Natural killer cell (primary cell): ENCODE measurements at regions of chr5 and their contacts with region 1.

Region 1: DNA sequence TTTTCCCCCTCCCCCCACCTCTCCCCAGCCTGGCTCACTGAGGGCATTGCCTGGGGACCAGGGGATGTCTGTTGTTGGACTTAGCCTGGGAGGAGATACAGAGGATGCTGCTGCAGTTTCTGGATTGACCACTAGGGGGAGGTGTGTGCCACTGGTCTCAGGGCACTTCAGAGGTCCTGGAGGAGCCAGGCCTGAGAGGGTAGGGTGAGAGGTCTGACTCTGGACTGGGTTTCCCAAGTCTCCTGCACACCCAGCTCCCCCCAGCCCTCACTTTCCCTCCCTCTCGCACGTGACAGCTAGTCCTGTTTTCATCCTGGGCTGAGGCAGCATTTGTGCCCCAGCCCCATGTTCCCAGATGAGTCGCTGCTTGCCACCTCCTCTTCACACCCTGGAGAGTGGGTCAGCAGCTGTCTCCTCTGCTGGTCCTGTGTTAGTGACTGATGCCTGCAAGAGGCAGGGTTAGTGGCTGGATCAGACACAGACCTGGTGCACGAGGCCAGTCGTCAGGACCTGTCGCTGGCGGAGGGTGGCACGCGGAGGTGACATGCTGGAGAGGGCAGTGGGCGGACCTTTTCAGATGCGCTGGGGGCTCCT is 4.4 kb downstream of the IL3 start:
- DNase-seq: peak; percentile 76 to 88
- ATAC-seq: peak; percentile 78 to 81 (median 79)
- H3K4me3 ChIP-seq: no peak overlapping the region
- H3K4me3 Mint-ChIP-seq: no peak overlapping the region
- H3K27ac ChIP-seq: no peak overlapping the region
- H3K27ac Mint-ChIP-seq: peak overlapping the region in 1 of 2 donors; percentile 9
- H3K4me1 ChIP-seq: peaks cover 27% of the 10 kb centered on the region
- H3K4me1 Mint-ChIP-seq: peaks cover 13 to 37% of the 10 kb centered on the region in 2 donors
- H3K27me3 ChIP-seq: no peaks in the 10 kb centered on the region
- H3K27me3 Mint-ChIP-seq: no peaks in the 10 kb centered on the region
- CTCF ChIP-seq: peak; percentile 67

Region 2: GRCh38 chr5:131589510-131590348 is 475.1 kb before region 1 on chr5:
- intact Hi-C with region 1: loop called (anchors 1 kb)
- DNase-seq: peak in 1 of 2 donors; percentile 81
- ATAC-seq: peak; percentile 65 to 78 (median 75)
- H3K4me3 ChIP-seq: no peak overlapping the region
- H3K4me3 Mint-ChIP-seq: no peak overlapping the region
- H3K27ac ChIP-seq: no peak overlapping the region
- H3K27ac Mint-ChIP-seq: no peak overlapping the region
- H3K4me1 ChIP-seq: peaks cover 14% of the 10 kb centered on the region
- H3K4me1 Mint-ChIP-seq: peaks cover 24 to 26% of the 10 kb centered on the region in 2 donors
- H3K27me3 ChIP-seq: no peaks in the 10 kb centered on the region
- H3K27me3 Mint-ChIP-seq: no peaks in the 10 kb centered on the region
- CTCF ChIP-seq: peak; percentile 92

Region 3: GRCh38 chr5:131671994-131672655 is 392.7 kb before region 1 on chr5:
- intact Hi-C with region 1: no loop called
- DNase-seq: no peak
- ATAC-seq: no peak
- H3K4me3 ChIP-seq: no peak overlapping the region
- H3K4me3 Mint-ChIP-seq: no peak overlapping the region
- H3K27ac ChIP-seq: no peak overlapping the region
- H3K27ac Mint-ChIP-seq: peak overlapping the region; percentile 55 to 74
- H3K4me1 ChIP-seq: no peaks in the 10 kb centered on the region
- H3K4me1 Mint-ChIP-seq: no peaks in the 10 kb centered on the region
- H3K27me3 ChIP-seq: no peaks in the 10 kb centered on the region
- H3K27me3 Mint-ChIP-seq: no peaks in the 10 kb centered on the region
- CTCF ChIP-seq: no peak

Region 4: GRCh38 chr5:131854134-131854533 is 210.7 kb before region 1 on chr5:
- intact Hi-C with region 1: no loop called
- DNase-seq: peak in 1 of 2 donors; percentile 31
- ATAC-seq: peak; percentile 60 to 70 (median 67)
- H3K4me3 ChIP-seq: no peak overlapping the region
- H3K4me3 Mint-ChIP-seq: no peak overlapping the region
- H3K27ac ChIP-seq: peak overlapping the region; percentile 25
- H3K27ac Mint-ChIP-seq: peak overlapping the region; percentile 65 to 70
- H3K4me1 ChIP-seq: no peaks in the 10 kb centered on the region
- H3K4me1 Mint-ChIP-seq: peaks cover 15 to 18% of the 10 kb centered on the region in 2 donors
- H3K27me3 ChIP-seq: peaks cover 3% of the 10 kb centered on the region
- H3K27me3 Mint-ChIP-seq: peaks cover 3 to 8% of the 10 kb centered on the region in 2 donors
- CTCF ChIP-seq: no peak

Region 5: GRCh38 chr5:132103332-132103951 is 38.6 kb after region 1 on chr5:
- intact Hi-C with region 1: loop called (anchors 5 kb)
- DNase-seq: peak; percentile 69 to 85
- ATAC-seq: peak; percentile 65 to 88 (median 75)
- H3K4me3 ChIP-seq: no peak overlapping the region
- H3K4me3 Mint-ChIP-seq: peak overlapping the region; percentile 71
- H3K27ac ChIP-seq: peak overlapping the region; percentile 94
- H3K27ac Mint-ChIP-seq: peak overlapping the region; percentile 92 to 94
- H3K4me1 ChIP-seq: peaks cover 66% of the 10 kb centered on the region
- H3K4me1 Mint-ChIP-seq: peaks cover 71 to 74% of the 10 kb centered on the region in 2 donors
- H3K27me3 ChIP-seq: no peaks in the 10 kb centered on the region
- H3K27me3 Mint-ChIP-seq: no peaks in the 10 kb centered on the region
- CTCF ChIP-seq: no peak

Region 6: GRCh38 chr5:132114150-132115121 is 49.6 kb after region 1 on chr5:
- intact Hi-C with region 1: loop called (anchors 5 kb)
- DNase-seq: no peak
- ATAC-seq: peak; percentile 45 to 65 (median 52)
- H3K4me3 ChIP-seq: no peak overlapping the region
- H3K4me3 Mint-ChIP-seq: peak overlapping the region; percentile 77
- H3K27ac ChIP-seq: no peak overlapping the region
- H3K27ac Mint-ChIP-seq: peak overlapping the region; percentile 83 to 92
- H3K4me1 ChIP-seq: peaks cover 38% of the 10 kb centered on the region
- H3K4me1 Mint-ChIP-seq: peaks cover 58 to 67% of the 10 kb centered on the region in 2 donors
- H3K27me3 ChIP-seq: no peaks in the 10 kb centered on the region
- H3K27me3 Mint-ChIP-seq: no peaks in the 10 kb centered on the region
- CTCF ChIP-seq: no peak

Region 7: GRCh38 chr5:132134384-132134783 is 69.5 kb after region 1 on chr5:
- intact Hi-C with region 1: loop called (anchors 1 kb)
- DNase-seq: peak in 1 of 2 donors; percentile 55
- ATAC-seq: peak in 2 of 3 donors; percentile 38 to 48
- H3K4me3 ChIP-seq: no peak overlapping the region
- H3K4me3 Mint-ChIP-seq: no peak overlapping the region
- H3K27ac ChIP-seq: no peak overlapping the region
- H3K27ac Mint-ChIP-seq: no peak overlapping the region
- H3K4me1 ChIP-seq: no peaks in the 10 kb centered on the region
- H3K4me1 Mint-ChIP-seq: no peaks in the 10 kb centered on the region
- H3K27me3 ChIP-seq: no peaks in the 10 kb centered on the region
- H3K27me3 Mint-ChIP-seq: peaks cover 0 to under 1% of the 10 kb centered on the region in 2 donors
- CTCF ChIP-seq: peak; percentile 42

Region 8: DNA sequence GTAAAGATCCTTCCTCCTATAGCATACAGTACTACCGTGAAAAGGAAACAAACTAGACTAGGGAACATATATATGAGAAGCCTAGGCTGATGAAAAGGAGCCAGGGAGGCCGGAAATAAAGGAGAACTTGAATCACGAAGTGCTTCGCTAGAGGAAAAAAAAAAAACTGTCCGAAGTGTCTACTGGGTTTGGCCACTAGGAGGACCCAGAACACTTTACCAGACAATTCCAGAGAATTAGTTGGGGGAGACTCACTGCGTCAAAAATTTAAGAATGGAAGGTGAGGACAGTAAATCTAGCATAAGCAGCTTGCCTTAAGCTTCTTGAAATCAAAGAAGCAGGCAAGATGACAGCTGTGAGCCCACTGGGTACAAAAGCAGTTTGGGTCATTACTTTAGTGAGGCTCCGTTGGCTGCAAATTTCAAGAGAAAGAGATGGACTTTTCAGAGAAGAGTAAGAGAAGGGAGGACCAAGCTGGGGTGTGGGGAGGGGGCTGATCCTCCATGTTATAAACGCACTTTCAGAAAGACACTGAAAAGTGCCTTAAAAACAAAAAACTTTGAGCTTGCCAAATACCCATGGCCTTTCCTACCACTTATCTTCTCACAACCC is 115.4 kb after region 1 on chr5:
- intact Hi-C with region 1: loop called (anchors 1 kb)
- DNase-seq: peak in 1 of 2 donors; percentile 30
- ATAC-seq: peak in 2 of 3 donors; percentile 44 to 66
- H3K4me3 ChIP-seq: no peak overlapping the region
- H3K4me3 Mint-ChIP-seq: no peak overlapping the region
- H3K27ac ChIP-seq: no peak overlapping the region
- H3K27ac Mint-ChIP-seq: no peak overlapping the region
- H3K4me1 ChIP-seq: no peaks in the 10 kb centered on the region
- H3K4me1 Mint-ChIP-seq: peaks cover 8 to 17% of the 10 kb centered on the region in 2 donors
- H3K27me3 ChIP-seq: no peaks in the 10 kb centered on the region
- H3K27me3 Mint-ChIP-seq: peaks cover 0 to 4% of the 10 kb centered on the region in 2 donors
- CTCF ChIP-seq: peak; percentile 65

Region 9: GRCh38 chr5:132190161-132190817 is 125.5 kb after region 1 on chr5:
- intact Hi-C with region 1: loop called (anchors 5 kb)
- DNase-seq: peak in 1 of 2 donors; percentile 68
- ATAC-seq: peak; percentile 70 to 97 (median 95)
- H3K4me3 ChIP-seq: no peak overlapping the region
- H3K4me3 Mint-ChIP-seq: no peak overlapping the region
- H3K27ac ChIP-seq: no peak overlapping the region
- H3K27ac Mint-ChIP-seq: no peak overlapping the region
- H3K4me1 ChIP-seq: no peaks in the 10 kb centered on the region
- H3K4me1 Mint-ChIP-seq: no peaks in the 10 kb centered on the region
- H3K27me3 ChIP-seq: no peaks in the 10 kb centered on the region
- H3K27me3 Mint-ChIP-seq: peaks cover 8 to 10% of the 10 kb centered on the region in 2 donors
- CTCF ChIP-seq: peak; percentile 37

Region 10: GRCh38 chr5:132386644-132387286 is 321.9 kb after region 1 on chr5:
- intact Hi-C with region 1: no loop called
- DNase-seq: peak; percentile 72 to 91
- ATAC-seq: peak; percentile 90 to 94 (median 91)
- H3K4me3 ChIP-seq: no peak overlapping the region
- H3K4me3 Mint-ChIP-seq: no peak overlapping the region
- H3K27ac ChIP-seq: no peak overlapping the region
- H3K27ac Mint-ChIP-seq: peak overlapping the region; percentile 37 to 81
- H3K4me1 ChIP-seq: peaks cover 26% of the 10 kb centered on the region
- H3K4me1 Mint-ChIP-seq: peaks cover 15 to 35% of the 10 kb centered on the region in 2 donors
- H3K27me3 ChIP-seq: no peaks in the 10 kb centered on the region
- H3K27me3 Mint-ChIP-seq: no peaks in the 10 kb centered on the region
- CTCF ChIP-seq: peak; percentile 85